Transverse colon (tissue), 4 donors: ENCODE measurements at regions of chr7 and their contacts with region 1.

Region 1: GRCh38 chr7:71465741-71466189 is 333.8 kb downstream of the GALNT17 start:
- DNase-seq: no peak
- H3K4me3 ChIP-seq: no peak overlapping the region
- H3K27ac ChIP-seq: no peak overlapping the region
- H3K4me1 ChIP-seq: no peaks in the 10 kb centered on the region
- H3K27me3 ChIP-seq: no peaks in the 10 kb centered on the region
- CTCF ChIP-seq: no peak
- EP300 ChIP-seq: no peak
- POLR2A ChIP-seq: no peak

Region 2: DNA sequence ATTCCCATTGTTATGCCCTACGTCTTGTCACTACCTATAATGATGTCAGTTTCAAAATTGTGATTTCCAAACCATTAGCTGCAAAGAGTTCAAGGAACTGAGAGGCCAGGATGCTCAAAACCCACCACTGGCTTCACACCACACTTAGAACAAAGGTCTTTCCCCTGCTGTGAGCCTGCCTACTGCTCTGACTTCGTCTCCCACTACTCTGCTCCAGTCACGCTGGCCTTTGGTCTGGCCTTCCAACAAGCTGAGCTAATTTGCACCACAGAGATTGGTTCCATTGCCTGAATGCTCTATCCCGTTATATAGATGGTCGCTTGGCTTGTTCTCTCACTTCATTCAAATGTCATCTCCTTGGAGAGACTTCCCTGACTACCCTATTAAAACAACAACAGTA is 906.0 kb before region 1 on chr7:
- in situ Hi-C with region 1: no loop called
- intact Hi-C with region 1: loop called (anchors 5 kb)
- DNase-seq: no peak
- H3K4me3 ChIP-seq: no peak overlapping the region
- H3K27ac ChIP-seq: no peak overlapping the region
- H3K4me1 ChIP-seq: no peaks in the 10 kb centered on the region
- H3K27me3 ChIP-seq: no peaks in the 10 kb centered on the region
- CTCF ChIP-seq: no peak
- EP300 ChIP-seq: no peak
- POLR2A ChIP-seq: no peak

Region 3: DNA sequence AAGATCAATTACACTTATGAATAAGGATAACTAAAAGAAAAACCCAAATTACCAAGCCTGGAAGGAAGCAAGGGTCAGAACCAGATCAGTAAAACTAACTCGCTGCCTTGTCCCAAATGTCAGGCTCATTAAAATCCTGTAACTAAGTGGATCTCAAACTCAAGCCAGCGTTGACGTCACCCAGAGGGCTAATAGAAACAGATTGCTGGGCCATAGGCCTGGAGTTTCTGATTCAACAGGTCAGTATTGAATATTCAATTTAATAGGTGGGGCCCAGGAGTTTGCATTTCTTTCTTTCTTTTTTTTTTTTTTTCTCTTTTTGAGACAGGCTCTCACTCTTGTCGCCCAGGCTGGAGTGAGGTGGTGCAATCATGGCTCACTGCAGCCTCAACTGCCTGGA is 549.4 kb after region 1 on chr7:
- in situ Hi-C with region 1: no loop called
- intact Hi-C with region 1: no loop called
- DNase-seq: no peak
- H3K4me3 ChIP-seq: no peak overlapping the region
- H3K27ac ChIP-seq: no peak overlapping the region
- H3K4me1 ChIP-seq: no peaks in the 10 kb centered on the region
- H3K27me3 ChIP-seq: no peaks in the 10 kb centered on the region
- CTCF ChIP-seq: no peak
- EP300 ChIP-seq: no peak
- POLR2A ChIP-seq: no peak